PC-3 (cell line): ENCODE measurements at regions of chr18 and their contacts with region 1.

Region 1: GRCh38 chr18:63831080-63831788 is 56.0 kb downstream of the SERPINB7 start:
- DNase-seq: peak; percentile 82
- ATAC-seq: peak; percentile 52
- H3K4me3 ChIP-seq: no peak overlapping the region
- H3K27ac ChIP-seq: peak overlapping the region; percentile 100
- H3K4me1 ChIP-seq: peaks cover 74% of the 10 kb centered on the region
- H3K27me3 ChIP-seq: no peaks in the 10 kb centered on the region
- CTCF ChIP-seq: no peak

Region 2: DNA sequence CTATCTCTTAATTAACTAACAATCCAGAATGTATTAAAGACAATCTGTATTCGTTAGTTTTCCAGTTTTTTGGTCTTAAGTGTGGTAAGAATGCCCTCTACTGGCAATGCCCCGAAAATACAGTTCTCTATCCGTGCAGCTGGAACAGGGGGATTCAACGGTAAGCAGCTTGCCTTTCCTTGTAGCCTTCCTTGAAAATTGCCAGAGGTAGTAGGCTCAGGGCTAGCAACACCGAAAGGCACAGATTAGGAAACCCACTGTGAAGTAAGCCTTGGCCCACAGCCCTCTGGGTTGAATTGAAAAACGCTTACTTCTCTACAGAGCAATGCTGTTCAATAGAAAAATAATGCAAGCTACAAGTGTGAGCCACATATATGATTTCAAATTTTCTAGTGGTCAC is 391.9 kb before region 1 on chr18:
- CTCF ChIA-PET with region 1: no interaction called
- POLR2A ChIA-PET with region 1: no interaction called
- intact Hi-C with region 1: no loop called
- DNase-seq: peak; percentile 79
- ATAC-seq: peak; percentile 34
- H3K4me3 ChIP-seq: no peak overlapping the region
- H3K27ac ChIP-seq: no peak overlapping the region
- H3K4me1 ChIP-seq: peaks cover 20% of the 10 kb centered on the region
- H3K27me3 ChIP-seq: no peaks in the 10 kb centered on the region
- CTCF ChIP-seq: peak; percentile 92

Region 3: DNA sequence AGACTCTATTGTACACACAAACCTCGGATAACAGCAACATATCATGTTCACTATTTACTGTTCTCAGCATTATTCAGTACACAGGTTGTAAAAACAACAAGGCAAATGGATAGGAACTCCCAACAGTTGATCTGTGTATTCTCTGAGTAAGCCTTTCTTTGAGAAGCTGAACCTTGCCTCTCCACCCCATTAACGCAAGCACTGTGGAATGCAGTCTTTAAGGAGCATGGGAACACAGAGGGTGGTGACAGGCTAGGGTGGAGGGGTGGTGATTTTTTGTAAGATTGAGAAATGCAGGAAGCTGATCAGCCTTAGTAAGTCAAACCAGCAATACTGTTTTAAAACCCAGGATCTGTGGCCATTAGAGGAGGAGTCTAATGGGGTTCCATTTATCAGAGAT is 148.1 kb before region 1 on chr18:
- CTCF ChIA-PET with region 1: no interaction called
- POLR2A ChIA-PET with region 1: no interaction called
- intact Hi-C with region 1: loop called (anchors 2 kb)
- DNase-seq: peak; percentile 97
- ATAC-seq: peak; percentile 87
- H3K4me3 ChIP-seq: peak overlapping the region; percentile 36; the same call in 1 of the 2 replicates
- H3K27ac ChIP-seq: peak overlapping the region; percentile 100
- H3K4me1 ChIP-seq: peaks cover 48% of the 10 kb centered on the region
- H3K27me3 ChIP-seq: no peaks in the 10 kb centered on the region
- CTCF ChIP-seq: no peak

Region 4: DNA sequence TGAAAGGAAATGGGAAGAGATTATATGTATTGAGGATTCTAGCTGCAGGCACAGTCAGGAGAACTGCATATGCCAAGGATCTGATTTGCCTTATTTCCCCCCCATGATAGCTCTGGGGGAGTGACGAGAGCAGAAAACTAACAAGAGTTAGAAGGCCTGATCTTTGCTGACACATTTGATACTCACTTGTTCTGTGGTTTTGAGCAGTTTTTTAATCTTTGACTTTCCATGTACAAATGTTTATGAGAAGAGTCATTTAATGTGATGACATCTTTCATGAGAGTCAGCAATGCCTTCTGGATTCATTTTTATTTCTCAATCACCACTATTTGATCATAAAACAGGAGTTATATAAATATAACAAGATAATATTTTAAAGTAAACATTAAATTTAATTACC is 68.7 kb before region 1 on chr18:
- CTCF ChIA-PET with region 1: no interaction called
- POLR2A ChIA-PET with region 1: no interaction called
- intact Hi-C with region 1: loop called (anchors 1 kb)
- DNase-seq: peak; percentile 89
- ATAC-seq: peak; percentile 81
- H3K4me3 ChIP-seq: no peak overlapping the region
- H3K27ac ChIP-seq: peak overlapping the region; percentile 96
- H3K4me1 ChIP-seq: peaks cover 32% of the 10 kb centered on the region
- H3K27me3 ChIP-seq: no peaks in the 10 kb centered on the region
- CTCF ChIP-seq: no peak

Region 5: GRCh38 chr18:63775166-63775730 is 56.0 kb before region 1 on chr18 and contains the start of gene SERPINB7:
- CTCF ChIA-PET with region 1: no interaction called
- POLR2A ChIA-PET with region 1: no interaction called
- intact Hi-C with region 1: loop called (anchors 2 kb)
- DNase-seq: peak; percentile 96
- ATAC-seq: peak; percentile 92
- H3K4me3 ChIP-seq: peak within 1 kb of the TSS; percentile 51
- H3K27ac ChIP-seq: peak within 1 kb of the TSS; percentile 97
- H3K4me1 ChIP-seq: peaks cover 74% of the 10 kb centered on the region
- H3K27me3 ChIP-seq: no peaks in the 10 kb centered on the region
- CTCF ChIP-seq: no peak
- total RNA-seq, gene SERPINB7: 71.9 and 74.5 TPM in 2 replicates

Region 6: GRCh38 chr18:63788447-63789096 is 42.7 kb before region 1 on chr18:
- CTCF ChIA-PET with region 1: no interaction called
- POLR2A ChIA-PET with region 1: no interaction called
- intact Hi-C with region 1: loop called (anchors 1 kb)
- DNase-seq: peak; percentile 96
- ATAC-seq: peak; percentile 98
- H3K4me3 ChIP-seq: no peak overlapping the region
- H3K27ac ChIP-seq: peak overlapping the region; percentile 100
- H3K4me1 ChIP-seq: peaks cover 32% of the 10 kb centered on the region
- H3K27me3 ChIP-seq: no peaks in the 10 kb centered on the region
- CTCF ChIP-seq: no peak